Endothelial cell of umbilical vein (primary cell): ENCODE measurements at regions of chr17 and their contacts with region 1.

Region 1: DNA sequence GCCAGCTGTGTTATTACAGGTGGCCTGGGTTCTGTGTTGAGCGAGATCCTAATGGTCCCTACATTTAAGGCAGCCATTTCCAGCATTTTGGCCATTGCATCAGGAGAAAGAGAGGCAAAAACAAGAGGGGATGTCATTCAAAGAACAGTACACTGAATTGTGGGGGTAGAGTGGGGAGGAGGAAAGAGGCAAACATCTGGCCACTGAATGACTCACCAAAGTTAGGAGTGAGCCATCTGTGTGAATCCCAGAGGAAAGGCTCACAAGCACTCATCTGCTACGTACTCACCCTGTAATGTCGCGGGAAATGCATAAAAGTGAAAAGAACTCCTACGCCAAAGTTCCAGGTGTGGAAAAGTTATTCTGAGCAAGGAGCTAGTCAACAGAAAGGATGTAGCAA is 16.7 kb downstream of the KRABD2 start:
- DNase-seq: peak; percentile 95
- H3K4me3 ChIP-seq: peak overlapping the region in 1 of 3 experiments; percentile 50
- H3K27ac ChIP-seq: peak overlapping the region; percentile 90
- H3K4me1 ChIP-seq: peaks cover 32% of the 10 kb centered on the region
- H3K27me3 ChIP-seq: no peaks in the 10 kb centered on the region
- CTCF ChIP-seq: no peak
- POLR2A ChIP-seq: no peak

Region 2: GRCh38 chr17:8163978-8164814 is 195.6 kb before region 1 on chr17:
- CTCF ChIA-PET with region 1: no interaction called
- POLR2A ChIA-PET with region 1: no interaction called
- dilution Hi-C with region 1: no loop called
- intact Hi-C with region 1: no loop called
- DNase-seq: no peak
- H3K4me3 ChIP-seq: no peak overlapping the region
- H3K27ac ChIP-seq: no peak overlapping the region
- H3K4me1 ChIP-seq: peaks cover 20% of the 10 kb centered on the region
- H3K27me3 ChIP-seq: no peaks in the 10 kb centered on the region
- CTCF ChIP-seq: no peak
- POLR2A ChIP-seq: no peak

Region 3: GRCh38 chr17:8248751-8249607 is 110.8 kb before region 1 on chr17 and contains the start of gene PFAS:
- CTCF ChIA-PET with region 1: no interaction called
- POLR2A ChIA-PET with region 1: interaction called, 3 read pairs
- dilution Hi-C with region 1: no loop called
- intact Hi-C with region 1: loop called (anchors 1 kb)
- DNase-seq: peak; percentile 90
- H3K4me3 ChIP-seq: peak within 1 kb of the TSS; percentile 69 to 98 (median 80)
- H3K27ac ChIP-seq: peak within 1 kb of the TSS; percentile 73
- H3K4me1 ChIP-seq: peaks cover 14% of the 10 kb centered on the region
- H3K27me3 ChIP-seq: no peaks in the 10 kb centered on the region
- CTCF ChIP-seq: peak in 1 of 2 donors; percentile 6
- POLR2A ChIP-seq: peak; percentile 79
- total RNA-seq, gene PFAS: 84.1 and 108 TPM in 2 replicates

Region 4: DNA sequence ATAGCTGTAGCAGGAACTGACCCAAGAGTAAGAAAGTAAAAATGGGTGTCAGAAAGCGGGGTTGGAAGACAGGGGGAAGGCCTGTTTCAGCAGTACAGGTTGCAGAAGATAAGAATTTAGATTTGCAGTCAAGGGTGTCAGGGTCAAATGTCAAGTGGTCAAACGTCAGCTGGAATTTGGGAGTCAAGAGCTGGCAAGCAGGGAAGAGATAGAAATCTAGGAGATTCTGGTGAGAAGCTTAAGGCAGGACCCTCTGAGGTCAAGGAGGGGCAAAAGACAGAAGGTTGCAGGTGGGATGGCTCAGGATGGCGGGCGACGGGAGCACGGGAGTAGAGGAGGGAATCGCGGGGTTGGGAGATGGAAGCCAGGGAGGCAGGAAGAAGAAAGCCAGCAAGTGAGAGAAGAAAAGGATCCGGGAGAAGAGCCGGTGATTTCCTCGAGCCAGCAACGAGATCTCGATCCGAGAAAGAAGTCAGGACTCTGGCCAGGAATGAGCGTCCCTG is 64.9 kb before region 1 on chr17:
- CTCF ChIA-PET with region 1: no interaction called
- POLR2A ChIA-PET with region 1: no interaction called
- dilution Hi-C with region 1: no loop called
- intact Hi-C with region 1: loop called (anchors 2 kb)
- DNase-seq: no peak
- H3K4me3 ChIP-seq: peak overlapping the region; percentile 47 to 90 (median 61)
- H3K27ac ChIP-seq: peak overlapping the region; percentile 86
- H3K4me1 ChIP-seq: peaks cover 6% of the 10 kb centered on the region
- H3K27me3 ChIP-seq: no peaks in the 10 kb centered on the region
- CTCF ChIP-seq: no peak
- POLR2A ChIP-seq: no peak

Region 5: GRCh38 chr17:8311131-8311790 is 48.5 kb before region 1 on chr17:
- CTCF ChIA-PET with region 1: no interaction called
- POLR2A ChIA-PET with region 1: no interaction called
- dilution Hi-C with region 1: no loop called
- intact Hi-C with region 1: loop called (anchors 1 kb)
- DNase-seq: peak; percentile 46
- H3K4me3 ChIP-seq: peak overlapping the region; percentile 29 to 67 (median 60)
- H3K27ac ChIP-seq: peak overlapping the region; percentile 48
- H3K4me1 ChIP-seq: peaks cover 31% of the 10 kb centered on the region
- H3K27me3 ChIP-seq: no peaks in the 10 kb centered on the region
- CTCF ChIP-seq: no peak
- POLR2A ChIP-seq: no peak

Region 6: GRCh38 chr17:8326511-8327302 is 33.1 kb before region 1 on chr17:
- CTCF ChIA-PET with region 1: interaction called, 15 read pairs
- POLR2A ChIA-PET with region 1: interaction called, 10 read pairs
- dilution Hi-C with region 1: no loop called
- intact Hi-C with region 1: loop called (anchors 1 kb)
- DNase-seq: peak; percentile 56
- H3K4me3 ChIP-seq: peak overlapping the region; percentile 60 to 74 (median 71)
- H3K27ac ChIP-seq: peak overlapping the region; percentile 86
- H3K4me1 ChIP-seq: peaks cover 20% of the 10 kb centered on the region
- H3K27me3 ChIP-seq: no peaks in the 10 kb centered on the region
- CTCF ChIP-seq: peak in 1 of 2 donors; percentile 1
- POLR2A ChIP-seq: peak; percentile 59

Region 7: GRCh38 chr17:8345052-8345682 is 14.6 kb before region 1 on chr17:
- CTCF ChIA-PET with region 1: no interaction called
- POLR2A ChIA-PET with region 1: no interaction called
- dilution Hi-C with region 1: no loop called
- intact Hi-C with region 1: no loop called
- DNase-seq: no peak
- H3K4me3 ChIP-seq: no peak overlapping the region
- H3K27ac ChIP-seq: no peak overlapping the region
- H3K4me1 ChIP-seq: no peaks in the 10 kb centered on the region
- H3K27me3 ChIP-seq: peaks cover 10 to 16% of the 10 kb centered on the region in 2 experiments
- CTCF ChIP-seq: no peak
- POLR2A ChIP-seq: no peak

Region 8: GRCh38 chr17:8376271-8377067 is 16.7 kb after region 1 on chr17 and contains the start of gene KRABD2:
- CTCF ChIA-PET with region 1: interaction called, 22 read pairs
- POLR2A ChIA-PET with region 1: interaction called, 21 read pairs
- dilution Hi-C with region 1: no loop called
- intact Hi-C with region 1: loop called (anchors 1 kb)
- DNase-seq: peak; percentile 92
- H3K4me3 ChIP-seq: peak within 1 kb of the TSS; percentile 45 to 71 (median 64)
- H3K27ac ChIP-seq: peak within 1 kb of the TSS; percentile 75
- H3K4me1 ChIP-seq: peaks cover 27% of the 10 kb centered on the region
- H3K27me3 ChIP-seq: no peaks in the 10 kb centered on the region
- CTCF ChIP-seq: peak; percentile 65 to 90
- POLR2A ChIP-seq: peak; percentile 97

Region 9: DNA sequence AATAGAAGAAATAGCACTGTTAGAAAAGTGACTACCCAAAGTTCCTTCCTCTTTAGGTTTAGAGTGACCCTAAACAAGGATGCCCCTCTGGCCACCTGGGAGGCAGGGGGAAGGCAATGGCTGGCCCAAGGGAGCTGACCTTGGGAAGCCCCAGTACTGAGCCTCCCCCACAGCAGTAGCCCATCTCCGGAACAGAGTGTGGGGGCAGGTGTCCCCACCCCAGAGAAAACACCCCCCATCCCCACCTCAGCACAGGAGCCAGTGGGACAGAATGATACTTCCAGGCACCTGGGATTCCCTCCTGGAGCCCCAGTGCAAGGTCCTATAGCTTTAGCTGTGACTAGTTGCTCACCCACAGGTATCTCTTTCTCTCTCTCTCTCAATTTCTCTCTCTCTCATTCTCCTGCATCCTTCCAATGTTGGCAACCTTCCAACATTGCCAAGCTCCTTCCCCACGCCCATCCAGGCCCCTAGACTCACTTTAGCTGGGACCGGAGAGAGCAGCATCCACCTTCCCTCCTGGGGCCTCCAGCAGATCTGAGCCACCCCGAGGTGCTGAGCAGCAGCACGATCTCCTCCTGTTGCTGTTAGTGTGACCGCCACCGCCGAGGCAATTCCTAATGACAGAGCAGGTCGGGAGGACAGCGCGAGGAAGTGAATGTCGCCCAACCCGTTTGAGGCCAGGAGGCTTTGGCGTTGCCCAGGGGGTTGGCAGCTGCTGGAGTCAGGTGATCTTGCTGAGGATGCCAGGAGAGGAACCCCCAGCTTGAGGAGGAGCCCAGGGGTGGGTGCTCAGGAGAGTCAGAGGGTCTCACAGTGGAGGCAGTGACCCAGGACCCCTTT is 37.7 kb after region 1 on chr17 and contains the start of gene RNF222:
- CTCF ChIA-PET with region 1: no interaction called
- POLR2A ChIA-PET with region 1: no interaction called
- dilution Hi-C with region 1: no loop called
- intact Hi-C with region 1: no loop called
- DNase-seq: no peak
- H3K4me3 ChIP-seq: no peak within 1 kb of the TSS
- H3K27ac ChIP-seq: no peak within 1 kb of the TSS
- H3K4me1 ChIP-seq: peaks cover 4% of the 10 kb centered on the region
- H3K27me3 ChIP-seq: peaks cover 15 to 18% of the 10 kb centered on the region in 2 experiments
- CTCF ChIP-seq: no peak
- POLR2A ChIP-seq: no peak
- total RNA-seq, gene RNF222: not detected in 2 replicates

Region 10: DNA sequence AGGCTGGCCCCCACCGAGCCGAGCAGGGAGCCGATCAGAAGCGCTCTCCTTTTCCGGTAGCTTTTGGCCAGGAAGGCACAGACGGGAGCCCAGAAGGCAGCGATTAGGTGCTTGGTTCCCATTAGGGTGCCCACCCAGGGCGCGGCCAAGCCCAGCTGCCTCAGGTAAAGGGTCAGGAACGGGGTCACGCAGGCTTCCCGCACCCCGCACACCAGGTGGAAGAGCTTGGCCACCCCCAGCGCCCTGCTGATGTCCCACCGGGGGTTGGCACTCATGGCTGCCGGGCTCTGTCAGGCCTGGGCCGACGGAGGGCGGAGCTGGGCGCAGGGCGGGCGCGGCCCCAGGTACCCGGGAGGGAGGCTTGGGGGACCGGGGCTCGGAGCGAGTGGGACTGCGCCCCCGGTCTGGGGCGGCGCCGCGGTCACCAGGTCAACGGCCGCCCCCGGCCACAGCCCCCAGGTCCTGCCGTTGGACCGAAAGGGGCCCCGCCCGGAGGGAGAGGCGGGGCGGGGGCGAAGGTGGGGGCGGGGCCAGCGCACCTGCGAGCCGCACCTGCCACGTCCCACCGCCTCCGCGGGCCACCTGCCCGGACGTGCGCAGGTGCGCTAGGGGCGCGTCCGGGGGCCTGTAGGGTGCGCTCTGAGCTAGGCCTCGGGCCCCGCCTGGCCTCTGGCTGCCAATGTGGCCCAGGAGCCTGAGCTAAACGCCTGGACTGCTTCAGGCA is 439.2 kb after region 1 on chr17 and contains the start of gene MFSD6L:
- CTCF ChIA-PET with region 1: no interaction called
- POLR2A ChIA-PET with region 1: no interaction called
- dilution Hi-C with region 1: no loop called
- intact Hi-C with region 1: no loop called
- DNase-seq: no peak
- H3K4me3 ChIP-seq: no peak within 1 kb of the TSS
- H3K27ac ChIP-seq: no peak within 1 kb of the TSS
- H3K4me1 ChIP-seq: no peaks in the 10 kb centered on the region
- H3K27me3 ChIP-seq: peaks cover 4 to 5% of the 10 kb centered on the region in 2 experiments
- CTCF ChIP-seq: no peak
- POLR2A ChIP-seq: no peak
- total RNA-seq, gene MFSD6L: not detected in 2 replicates